Ovary (tissue), 10 donors: ENCODE measurements at regions of chr14 and their contacts with region 1.

Region 1: DNA sequence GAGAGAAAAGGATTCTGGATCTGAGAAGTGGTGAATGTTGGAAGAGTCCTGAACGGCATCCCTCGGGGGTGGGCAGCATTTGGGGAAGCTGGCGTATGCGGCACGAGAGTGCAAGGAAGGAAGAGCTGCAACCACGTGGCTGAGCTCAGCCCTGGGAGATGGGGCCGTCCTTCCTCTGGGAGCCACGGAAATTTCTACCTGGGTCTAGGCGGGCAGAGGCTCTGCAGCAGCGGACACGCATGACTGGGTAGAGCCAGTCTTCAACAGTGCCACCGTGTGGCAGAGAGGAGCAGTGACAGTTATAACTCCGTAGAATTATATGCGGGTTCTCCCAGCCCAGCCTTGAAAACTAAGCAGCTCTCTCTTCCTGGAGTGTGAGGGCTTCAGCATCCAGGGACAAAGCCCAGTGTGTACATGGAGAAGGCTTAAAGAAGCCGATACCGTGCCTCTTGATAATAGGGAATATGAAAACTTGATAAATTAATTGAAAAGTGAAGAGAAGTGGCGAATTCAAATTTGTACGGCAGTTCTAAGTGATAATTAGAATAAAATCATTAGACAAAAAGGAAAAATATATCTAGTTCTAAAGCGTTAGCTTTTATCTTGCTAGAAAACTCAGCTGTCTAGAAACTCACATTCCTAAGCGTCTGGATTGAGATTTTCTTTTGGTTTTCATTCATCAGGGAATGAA is 82.9 kb upstream of the STXBP6 start:
- DNase-seq: peak in 4 of 5 donors; percentile 22 to 50 (median 40)
- H3K4me3 ChIP-seq: no peak overlapping the region
- H3K27ac ChIP-seq: no peak overlapping the region
- H3K4me1 ChIP-seq: no peaks in the 10 kb centered on the region
- H3K27me3 ChIP-seq: no peaks in the 10 kb centered on the region
- CTCF ChIP-seq: peak in 2 of 3 donors; percentile 13 to 45
- EP300 ChIP-seq: no peak
- POLR2A ChIP-seq: no peak

Region 2: DNA sequence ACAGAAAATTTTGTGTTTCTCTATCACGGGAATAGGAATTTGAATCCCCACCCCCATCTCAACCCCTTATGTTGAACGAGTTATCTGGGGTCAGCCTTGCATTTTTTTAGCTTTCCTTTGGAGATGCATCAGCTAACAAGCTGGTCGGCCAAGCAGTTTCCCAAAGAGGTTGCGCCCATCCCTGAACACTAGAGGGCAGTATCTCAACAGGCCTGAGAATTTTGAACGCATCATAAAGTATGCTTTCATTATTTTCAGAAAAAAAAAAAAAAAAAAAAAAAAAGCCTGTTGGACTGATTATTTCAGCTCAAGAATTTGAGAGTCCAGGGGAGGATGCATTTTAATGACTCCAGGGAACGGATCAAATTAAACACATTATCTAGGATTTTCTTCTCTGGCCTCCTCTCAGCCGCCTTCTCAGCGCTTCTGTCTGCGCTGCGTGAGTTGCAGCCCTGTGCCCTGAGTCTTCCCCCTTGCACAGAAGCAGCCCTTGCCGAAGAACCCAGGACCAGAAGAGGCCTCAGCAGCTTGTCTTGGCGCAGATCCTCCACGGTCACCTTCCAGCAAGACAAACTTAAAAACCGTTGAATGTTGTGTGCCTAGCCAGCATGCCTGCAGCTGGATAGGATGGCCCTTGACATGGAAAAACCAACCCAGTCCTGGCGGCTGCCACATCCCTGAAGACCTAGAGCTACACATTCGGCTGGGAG is 422.3 kb before region 1 on chr14:
- intact Hi-C with region 1: loop called in 1 of 4 experiments (anchors 10 kb)
- DNase-seq: peak; percentile 21 to 47 (median 46)
- H3K4me3 ChIP-seq: peak overlapping the region; percentile 16
- H3K27ac ChIP-seq: no peak overlapping the region
- H3K4me1 ChIP-seq: no peaks in the 10 kb centered on the region
- H3K27me3 ChIP-seq: no peaks in the 10 kb centered on the region
- CTCF ChIP-seq: peak in 2 of 3 donors; percentile 11 to 15
- EP300 ChIP-seq: no peak
- POLR2A ChIP-seq: no peak

Region 3: DNA sequence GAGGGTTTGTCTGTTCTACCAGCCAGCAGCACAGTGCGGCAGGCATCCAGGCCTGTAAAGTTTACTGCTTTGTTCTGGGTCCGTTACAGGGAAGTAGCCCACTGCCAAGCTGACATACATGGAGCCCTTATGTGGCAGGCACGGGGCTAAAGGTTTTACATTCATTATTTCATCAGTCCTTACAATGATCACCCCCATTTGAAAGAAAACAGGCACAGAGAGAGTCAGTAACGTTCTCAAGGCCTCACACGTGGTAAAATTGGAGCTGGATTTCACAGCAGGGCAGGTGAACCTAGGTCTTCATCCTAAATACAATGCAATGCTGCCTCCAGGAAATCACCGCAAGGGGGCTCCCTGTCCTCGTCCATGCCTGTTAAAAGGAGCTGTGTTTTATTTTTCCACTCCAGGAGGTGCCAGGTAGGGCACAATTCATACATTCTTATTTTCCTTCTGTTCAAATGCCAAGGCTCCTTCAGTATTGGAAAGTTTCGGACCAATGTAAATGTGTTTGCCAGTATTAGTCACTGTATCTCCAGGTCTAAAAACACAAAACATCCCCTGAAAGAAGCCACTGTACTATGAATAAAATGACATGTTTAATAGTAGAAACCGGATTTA is 326.7 kb before region 1 on chr14:
- intact Hi-C with region 1: loop called in 1 of 4 experiments (anchors 10 kb)
- DNase-seq: peak in 4 of 5 donors; percentile 21 to 60 (median 38)
- H3K4me3 ChIP-seq: no peak overlapping the region
- H3K27ac ChIP-seq: no peak overlapping the region
- H3K4me1 ChIP-seq: no peaks in the 10 kb centered on the region
- H3K27me3 ChIP-seq: no peaks in the 10 kb centered on the region
- CTCF ChIP-seq: peak in 1 of 3 donors; percentile 45
- EP300 ChIP-seq: no peak
- POLR2A ChIP-seq: no peak

Region 4: DNA sequence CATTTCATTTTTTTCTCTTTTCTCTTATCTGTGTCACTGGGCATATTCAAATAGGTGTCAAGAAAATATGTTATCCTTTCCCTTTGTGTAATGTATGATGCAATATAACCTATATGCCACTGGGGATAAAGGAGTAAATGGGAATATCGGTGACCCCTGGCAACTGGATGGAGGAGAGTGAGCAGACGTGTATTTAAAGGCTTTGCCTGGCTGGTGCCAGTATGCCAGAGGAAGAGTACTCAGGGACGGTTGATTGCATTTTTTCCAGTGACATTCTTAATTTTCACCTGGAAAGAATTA is 70.9 kb before region 1 on chr14:
- intact Hi-C with region 1: no loop called
- DNase-seq: no peak
- H3K4me3 ChIP-seq: no peak overlapping the region
- H3K27ac ChIP-seq: no peak overlapping the region
- H3K4me1 ChIP-seq: no peaks in the 10 kb centered on the region
- H3K27me3 ChIP-seq: no peaks in the 10 kb centered on the region
- CTCF ChIP-seq: no peak
- EP300 ChIP-seq: no peak
- POLR2A ChIP-seq: no peak

Region 5: GRCh38 chr14:25121337-25122122 is 11.3 kb before region 1 on chr14:
- intact Hi-C with region 1: no loop called
- DNase-seq: no peak
- H3K4me3 ChIP-seq: no peak overlapping the region
- H3K27ac ChIP-seq: no peak overlapping the region
- H3K4me1 ChIP-seq: no peaks in the 10 kb centered on the region
- H3K27me3 ChIP-seq: no peaks in the 10 kb centered on the region
- CTCF ChIP-seq: no peak
- EP300 ChIP-seq: no peak
- POLR2A ChIP-seq: no peak